ENCODE measurements at regions of chr15 and their contacts with region 1.

Region 1: GRCh38 chr15:68210821-68211655 is 5.9 kb upstream of the CALML4 start:
- DNase-seq: peak; percentile 94
- H3K4me3 ChIP-seq: peak overlapping the region in 1 of 2 experiments; percentile 23; a peak in 2 of 4 replicates
- H3K27ac ChIP-seq: peak overlapping the region in 1 of 2 experiments; percentile 67; a peak in 1 of 4 replicates
- H3K4me1 ChIP-seq: peaks cover 0 to 16% of the 10 kb centered on the region in 2 experiments; a peak in 1 of 4 replicates
- H3K27me3 ChIP-seq: no peaks in the 10 kb centered on the region
- CTCF ChIP-seq: peak; percentile 78
- EP300 ChIP-seq: no peak
- RAD21 ChIP-seq: peak; percentile 77

Region 2: GRCh38 chr15:68186671-68187397 is 24.2 kb before region 1 on chr15:
- CTCF ChIA-PET with region 1: interaction called, 14 read pairs
- POLR2A ChIA-PET with region 1: no interaction called
- DNase-seq: no peak
- H3K4me3 ChIP-seq: no peak overlapping the region; a peak in 1 of 4 replicates
- H3K27ac ChIP-seq: peak overlapping the region; percentile 72 to 94
- H3K4me1 ChIP-seq: peaks cover 20 to 24% of the 10 kb centered on the region in 2 experiments
- H3K27me3 ChIP-seq: no peaks in the 10 kb centered on the region
- CTCF ChIP-seq: no peak
- EP300 ChIP-seq: no peak
- RAD21 ChIP-seq: no peak

Region 3: DNA sequence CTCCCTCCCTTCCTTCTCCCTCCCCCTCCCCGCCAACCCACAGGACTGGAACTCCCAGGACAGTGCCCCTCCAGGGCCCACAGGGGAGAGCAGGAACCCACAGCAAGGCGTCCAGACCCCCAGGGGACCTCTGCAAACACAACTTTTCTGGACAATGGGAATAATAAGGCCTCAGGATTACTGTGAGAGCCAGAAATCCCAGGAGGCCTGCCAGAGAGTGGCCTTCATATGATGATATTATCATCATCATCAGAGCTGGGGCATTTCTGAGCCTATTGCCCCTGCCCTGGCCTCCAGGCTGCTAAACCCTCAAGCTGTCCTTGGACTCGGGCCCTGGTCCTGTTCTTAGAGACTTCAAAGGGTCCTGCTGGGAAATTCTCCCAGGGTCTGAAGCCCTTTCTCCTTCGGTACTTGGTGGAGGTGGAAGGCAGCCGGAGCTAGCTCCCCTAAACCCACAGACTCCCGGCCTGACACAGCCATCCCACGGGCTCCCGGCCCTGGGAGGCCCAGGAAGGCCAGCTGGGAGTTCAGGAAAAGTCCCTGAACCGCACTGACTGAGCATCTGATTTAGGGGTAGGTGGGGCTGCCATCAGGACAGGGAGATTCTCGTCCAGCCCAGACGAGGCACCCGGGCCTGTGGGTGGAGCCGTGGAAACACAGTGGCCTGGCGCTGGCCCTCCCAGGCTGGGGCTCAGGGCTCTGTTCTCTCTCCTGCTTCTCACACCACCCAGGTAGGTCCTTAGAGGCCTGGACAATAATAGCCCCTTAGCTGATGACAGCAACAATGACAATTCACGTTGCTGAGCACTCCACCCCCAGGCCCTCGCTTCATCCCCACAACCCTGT is 10.8 kb before region 1 on chr15:
- CTCF ChIA-PET with region 1: interaction called, 52 read pairs
- POLR2A ChIA-PET with region 1: no interaction called
- DNase-seq: peak; percentile 57
- H3K4me3 ChIP-seq: no peak overlapping the region
- H3K27ac ChIP-seq: 0 out of 4 replicates have a peak overlapping the region, but pooled peaks of 1 of the 2 experiments have one; percentile 3
- H3K4me1 ChIP-seq: peaks cover 0 to 25% of the 10 kb centered on the region in 2 experiments; a peak in 1 of 4 replicates
- H3K27me3 ChIP-seq: no peaks in the 10 kb centered on the region
- CTCF ChIP-seq: no peak
- EP300 ChIP-seq: no peak
- RAD21 ChIP-seq: no peak

Region 4: GRCh38 chr15:68229386-68230156 is 18.5 kb after region 1 on chr15 and contains the start of gene CLN6:
- CTCF ChIA-PET with region 1: interaction called, 20 read pairs
- POLR2A ChIA-PET with region 1: no interaction called
- DNase-seq: peak; percentile 97
- H3K4me3 ChIP-seq: peak within 1 kb of the TSS; percentile 74 to 96
- H3K27ac ChIP-seq: peak within 1 kb of the TSS; percentile 52 to 85
- H3K4me1 ChIP-seq: peaks cover 10 to 41% of the 10 kb centered on the region in 2 experiments; a peak in 2 of 4 replicates
- H3K27me3 ChIP-seq: no peaks in the 10 kb centered on the region
- CTCF ChIP-seq: no peak
- EP300 ChIP-seq: no peak
- RAD21 ChIP-seq: no peak
- polyA plus RNA-seq, gene CLN6: 27.5 and 32.2 TPM in 2 replicates